Prostate gland (tissue), 2 donors: ENCODE measurements at regions of chr3 and their contacts with region 1.

Region 1: GRCh38 chr3:153052096-153052460 is 109.9 kb upstream of the RAP2B start:
- DNase-seq: peak; percentile 5
- H3K4me3 ChIP-seq: no peak overlapping the region
- H3K27ac ChIP-seq: no peak overlapping the region
- H3K4me1 ChIP-seq: no peaks in the 10 kb centered on the region
- H3K27me3 ChIP-seq: no peaks in the 10 kb centered on the region
- CTCF ChIP-seq: no peak
- POLR2A ChIP-seq: no peak

Region 2: GRCh38 chr3:153161138-153161713 is 109.1 kb after region 1 on chr3:
- intact Hi-C with region 1: loop called (anchors 10 kb)
- DNase-seq: peak; percentile 96
- H3K4me3 ChIP-seq: peak overlapping the region; percentile 83 to 87
- H3K27ac ChIP-seq: peak overlapping the region; percentile 86 to 94
- H3K4me1 ChIP-seq: no peaks in the 10 kb centered on the region
- H3K27me3 ChIP-seq: no peaks in the 10 kb centered on the region
- CTCF ChIP-seq: peak in 1 of 4 experiments; percentile 10
- POLR2A ChIP-seq: peak; percentile 70

Region 3: GRCh38 chr3:153284282-153284938 is 232.3 kb after region 1 on chr3:
- intact Hi-C with region 1: loop called (anchors 10 kb)
- DNase-seq: peak; percentile 49
- H3K4me3 ChIP-seq: no peak overlapping the region
- H3K27ac ChIP-seq: peak overlapping the region in 1 of 2 donors; percentile 25
- H3K4me1 ChIP-seq: no peaks in the 10 kb centered on the region
- H3K27me3 ChIP-seq: no peaks in the 10 kb centered on the region
- CTCF ChIP-seq: no peak
- POLR2A ChIP-seq: no peak